HEK293T (cell line): ENCODE measurements at regions of chr6 and their contacts with region 1.

Region 1: DNA sequence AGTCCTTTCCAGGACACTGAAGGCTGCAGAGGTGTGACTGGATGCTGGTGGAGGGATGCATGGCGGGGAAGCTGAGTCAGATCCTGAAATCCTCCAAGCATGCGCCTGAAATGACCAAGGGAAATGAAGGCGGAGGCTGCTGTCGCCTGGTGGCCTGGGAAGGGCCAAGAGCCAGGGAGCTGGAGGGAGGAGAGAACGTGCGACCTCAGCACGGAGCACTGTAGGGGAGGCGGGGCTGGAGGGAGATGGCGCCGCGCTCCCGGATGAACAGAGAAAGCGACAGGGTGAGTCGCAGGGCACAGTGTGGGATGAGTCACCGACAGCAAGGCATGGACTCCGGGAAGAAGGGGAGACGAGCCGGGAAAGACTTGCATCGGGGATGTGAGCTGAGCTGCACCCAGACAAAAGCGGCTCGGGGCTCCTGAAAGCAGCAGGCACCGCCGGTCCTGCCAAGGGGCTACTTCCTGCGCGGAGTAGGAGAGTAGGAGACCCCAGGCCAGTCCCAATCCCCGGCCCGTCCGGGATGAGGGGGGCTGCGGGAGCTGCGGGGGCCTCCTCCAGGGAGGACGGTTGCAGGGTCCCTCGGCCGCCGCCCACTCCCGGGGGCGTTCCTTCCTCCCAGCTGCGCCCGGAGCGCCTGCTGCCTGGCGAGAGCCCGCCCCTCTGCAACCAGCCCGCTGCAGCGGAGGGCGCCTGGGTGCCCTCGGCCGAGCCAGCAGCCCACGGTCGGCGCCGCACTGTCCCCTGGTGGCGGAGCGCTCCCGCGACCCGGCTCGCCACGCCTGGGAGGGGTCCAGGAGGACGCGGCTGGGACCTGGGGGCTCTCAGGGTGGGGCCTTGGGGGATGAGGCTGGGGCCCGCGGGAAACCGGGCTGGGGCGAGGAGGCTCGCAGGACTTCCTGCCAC is 11.0 kb upstream of the NQO2 start:
- DNase-seq: peak; percentile 70

Region 2: GRCh38 chr6:2841264-2842138 is 147.2 kb before region 1 on chr6 and contains the start of gene SERPINB1:
- CTCF ChIA-PET with region 1: interaction called, 8 read pairs
- POLR2A ChIA-PET with region 1: interaction called, 19 read pairs
- DNase-seq: peak; percentile 72

Region 3: DNA sequence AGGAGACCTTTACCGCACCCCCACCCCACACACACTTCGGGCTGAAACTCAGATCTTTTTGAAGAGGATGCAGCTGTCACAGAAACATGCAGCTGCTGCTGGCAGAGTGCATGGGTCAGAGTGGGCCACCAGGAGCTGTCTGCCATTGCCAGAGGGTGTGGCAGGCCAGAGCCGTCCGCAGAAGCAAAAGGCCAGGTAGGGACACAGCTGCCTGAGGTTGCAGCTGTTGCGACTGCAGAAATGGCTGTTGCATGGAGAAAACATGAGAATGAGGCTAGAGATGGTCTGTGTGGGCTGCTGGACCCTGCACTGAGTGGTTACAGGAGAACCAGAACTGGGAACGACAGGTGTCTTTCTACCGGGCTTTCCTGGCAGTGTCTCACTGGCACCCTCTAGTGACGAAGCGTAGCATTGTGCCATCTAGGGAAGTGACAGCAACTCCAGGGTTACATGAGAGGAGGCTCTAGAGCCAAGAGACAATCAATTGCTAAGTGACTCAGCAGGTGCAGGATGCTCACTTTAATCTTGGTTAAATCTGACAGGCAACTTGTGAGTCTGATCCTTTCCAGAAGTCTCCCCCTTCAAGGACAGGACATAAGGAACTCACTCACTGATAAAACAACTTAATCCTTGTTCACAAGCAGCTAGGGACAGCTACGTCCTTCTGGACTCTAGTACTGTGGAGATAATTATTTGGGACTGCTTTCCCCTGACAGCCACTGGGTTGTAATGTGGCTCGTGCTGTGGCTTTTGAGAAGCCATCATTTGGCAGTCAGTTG is 56.5 kb before region 1 on chr6:
- CTCF ChIA-PET with region 1: no interaction called
- POLR2A ChIA-PET with region 1: interaction called, 12 read pairs
- DNase-seq: peak; percentile 84

Region 4: DNA sequence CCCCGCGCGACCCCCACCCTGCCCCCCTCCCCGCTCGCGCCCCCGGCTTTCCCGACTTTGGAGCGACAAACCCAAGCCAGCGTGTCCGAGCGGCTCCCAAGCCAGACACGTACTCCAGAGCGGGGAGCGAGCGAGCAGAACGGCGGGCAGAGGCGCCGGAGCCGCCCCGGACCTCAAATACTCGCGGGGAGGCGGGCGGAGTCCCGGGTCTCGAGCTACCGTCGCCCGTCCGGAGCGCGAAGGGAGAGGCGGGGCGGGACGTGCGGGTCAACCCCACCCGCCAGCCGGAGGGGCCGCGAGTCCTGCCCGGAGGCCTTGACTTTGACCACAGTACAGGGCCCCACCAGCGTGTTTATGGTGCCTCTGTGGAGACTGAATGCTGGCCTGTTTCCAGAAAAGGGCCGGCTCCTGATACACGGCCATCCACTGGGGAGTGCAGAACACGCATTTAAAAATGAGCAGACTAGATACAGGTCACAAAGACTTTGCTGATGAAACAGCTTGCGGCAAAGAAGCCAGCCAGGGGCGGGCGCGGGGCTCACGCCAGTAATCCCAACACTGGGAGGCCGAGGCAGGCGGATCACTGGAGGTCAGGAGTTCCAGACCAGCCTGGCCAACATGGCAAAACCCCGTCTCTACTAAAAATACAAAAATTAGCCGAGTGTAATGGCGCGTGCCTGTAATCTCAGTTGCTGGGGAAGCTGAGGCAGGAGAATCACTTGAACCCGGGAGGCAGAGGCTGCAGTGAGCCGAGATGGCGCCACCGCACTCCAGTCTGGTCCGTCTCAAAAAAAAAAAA is 17.1 kb before region 1 on chr6 and contains the start of gene SERPINB6:
- CTCF ChIA-PET with region 1: interaction called, 4 read pairs
- POLR2A ChIA-PET with region 1: interaction called, 28 read pairs
- DNase-seq: peak; percentile 47

Region 5: GRCh38 chr6:3068329-3069214 is 79.9 kb after region 1 on chr6 and contains the start of gene RIPK1:
- CTCF ChIA-PET with region 1: no interaction called
- POLR2A ChIA-PET with region 1: interaction called, 20 read pairs
- DNase-seq: peak; percentile 93